ENCODE measurements at regions of chr7 and their contacts with region 1.

Region 1: DNA sequence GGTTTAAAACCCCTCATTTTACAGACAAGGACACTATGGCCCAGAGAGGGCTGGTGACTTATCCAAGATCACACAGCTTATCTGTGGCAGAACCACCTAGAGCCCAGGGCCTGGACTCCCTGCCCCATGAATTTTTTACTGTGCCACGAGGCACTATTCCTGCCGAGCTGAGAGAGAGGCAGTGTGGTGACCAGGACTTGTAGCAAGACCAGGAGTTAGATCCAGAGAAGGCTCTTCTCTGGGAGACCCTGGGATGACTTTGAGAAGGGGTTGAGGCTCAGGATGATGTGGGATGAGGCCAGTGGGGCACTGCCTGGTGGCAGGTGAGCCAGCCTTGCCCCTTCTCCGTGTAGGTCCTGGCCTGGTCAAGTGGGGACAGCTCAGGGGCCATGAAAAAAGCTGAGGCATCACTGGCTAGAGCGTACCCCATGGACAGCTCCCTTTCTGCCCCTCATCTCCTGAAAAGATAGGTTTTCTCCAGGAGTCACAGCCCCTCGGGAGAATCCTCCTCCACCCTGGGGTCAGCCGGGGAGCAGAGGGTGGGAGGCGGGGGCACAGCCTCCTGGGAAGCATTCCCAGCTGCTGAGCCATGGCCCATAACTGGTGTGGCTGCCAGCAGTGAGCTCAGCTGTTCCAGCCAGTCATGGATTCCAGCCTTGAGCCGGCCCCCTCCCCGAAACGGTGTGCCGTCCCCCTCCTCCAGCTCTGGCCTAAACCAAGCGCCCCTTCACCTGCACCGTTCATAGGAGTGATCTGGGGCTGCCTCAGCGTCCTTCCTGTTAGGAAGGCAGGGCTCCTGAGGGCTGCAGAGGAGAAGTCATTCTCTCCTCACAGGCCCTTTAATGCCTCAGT is 5.8 kb downstream of the FLNC start:
- DNase-seq: peak in 6 of 10 donors; percentile 50 to 72 (median 66)
- H3K4me3 ChIP-seq: peak overlapping the region in 4 of 59 donors; percentile 6 to 31 (median 20)
- H3K27ac ChIP-seq: peak overlapping the region in 58 of 59 donors; percentile 2 to 99 (median 92)
- H3K27me3 ChIP-seq: peaks cover 0 to 5% (median 0%) of the 10 kb centered on the region in 45 donors
- CTCF ChIP-seq: no peak

Region 2: GRCh38 chr7:128862571-128863432 is 26.8 kb after region 1 on chr7 and contains the start of gene ATP6V1F:
- intact Hi-C with region 1: loop called in 1 of 2 experiments (anchors 2 kb)
- DNase-seq: peak; percentile 92 to 96 (median 94)
- H3K4me3 ChIP-seq: peak within 1 kb of the TSS; percentile 68 to 99 (median 89)
- H3K27ac ChIP-seq: peak within 1 kb of the TSS in 57 of 59 donors; percentile 7 to 93 (median 79)
- H3K27me3 ChIP-seq: no peaks in the 10 kb centered on the region
- CTCF ChIP-seq: peak in 31 of 56 donors; percentile 6 to 53 (median 27)
- total RNA-seq, gene ATP6V1F: 118 to 295 (median 219) TPM

Region 3: DNA sequence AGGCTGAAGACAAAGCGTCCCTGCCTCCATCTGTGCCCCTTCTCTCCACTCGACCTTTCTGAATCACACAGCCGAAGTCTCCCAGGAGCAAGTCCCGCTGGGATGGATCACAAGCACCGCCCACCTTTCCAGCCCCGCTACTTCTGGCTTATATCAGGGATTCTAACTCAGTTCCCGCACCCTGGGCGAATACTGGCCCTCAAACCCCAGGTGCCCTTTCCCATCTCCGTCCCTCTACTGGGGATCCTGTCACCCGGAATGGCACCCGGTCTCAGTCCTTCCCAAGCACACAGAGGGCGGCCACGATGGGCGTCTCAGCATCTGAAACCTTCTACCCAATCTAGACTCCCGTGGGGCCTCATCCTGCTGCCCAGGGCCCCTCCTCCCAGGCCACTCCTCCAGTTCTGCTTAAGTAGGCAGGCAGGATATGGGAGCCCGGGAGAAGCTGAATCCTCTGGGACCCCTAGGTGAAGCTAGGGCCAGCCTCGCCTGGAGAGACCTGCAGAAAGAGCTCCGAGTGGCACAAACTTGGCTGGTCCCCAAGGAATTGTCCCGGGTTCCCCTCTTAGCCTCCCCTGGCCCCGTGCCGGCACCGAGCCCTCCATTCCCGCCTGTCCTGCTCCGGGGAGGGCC is 73.7 kb after region 1 on chr7:
- intact Hi-C with region 1: no loop called
- DNase-seq: peak in 1 of 10 donors; percentile 19
- H3K4me3 ChIP-seq: peak overlapping the region in 31 of 59 donors; percentile 3 to 56 (median 29)
- H3K27ac ChIP-seq: no peak overlapping the region
- H3K27me3 ChIP-seq: peaks cover 0 to 63% (median 30%) of the 10 kb centered on the region in 45 donors
- CTCF ChIP-seq: no peak